ENCODE measurements at regions of chr6 and their contacts with region 1.

Region 1: DNA sequence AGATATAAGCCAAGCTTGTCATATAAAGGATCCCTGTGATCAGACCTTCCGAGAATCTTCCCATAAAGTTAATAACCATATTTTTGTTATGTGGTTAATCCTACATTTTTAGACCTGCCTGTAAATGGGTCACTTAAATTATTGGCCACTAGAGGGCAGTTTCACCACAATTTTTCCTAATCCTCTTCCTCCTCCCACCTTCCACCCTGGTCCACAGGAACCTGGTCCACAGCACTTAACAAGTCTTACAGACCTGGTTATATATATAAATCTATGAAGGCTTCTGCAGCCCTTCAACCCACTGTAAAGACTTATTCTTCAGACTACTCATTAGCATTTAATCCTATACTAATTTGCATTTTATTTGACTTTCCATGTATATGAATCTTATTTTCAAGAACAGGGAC is 28.3 kb downstream of the MRS2 start:
- DNase-seq: peak; percentile 7
- H3K4me3 ChIP-seq: no peak overlapping the region
- H3K27ac ChIP-seq: no peak overlapping the region
- H3K27me3 ChIP-seq: no peaks in the 10 kb centered on the region
- CTCF ChIP-seq: peak; percentile 72

Region 2: GRCh38 chr6:24270011-24270410 is 161.0 kb before region 1 on chr6:
- CTCF ChIA-PET with region 1: no interaction called
- POLR2A ChIA-PET with region 1: no interaction called
- DNase-seq: no peak
- H3K4me3 ChIP-seq: no peak overlapping the region
- H3K27ac ChIP-seq: no peak overlapping the region
- H3K27me3 ChIP-seq: no peaks in the 10 kb centered on the region
- CTCF ChIP-seq: no peak

Region 3: DNA sequence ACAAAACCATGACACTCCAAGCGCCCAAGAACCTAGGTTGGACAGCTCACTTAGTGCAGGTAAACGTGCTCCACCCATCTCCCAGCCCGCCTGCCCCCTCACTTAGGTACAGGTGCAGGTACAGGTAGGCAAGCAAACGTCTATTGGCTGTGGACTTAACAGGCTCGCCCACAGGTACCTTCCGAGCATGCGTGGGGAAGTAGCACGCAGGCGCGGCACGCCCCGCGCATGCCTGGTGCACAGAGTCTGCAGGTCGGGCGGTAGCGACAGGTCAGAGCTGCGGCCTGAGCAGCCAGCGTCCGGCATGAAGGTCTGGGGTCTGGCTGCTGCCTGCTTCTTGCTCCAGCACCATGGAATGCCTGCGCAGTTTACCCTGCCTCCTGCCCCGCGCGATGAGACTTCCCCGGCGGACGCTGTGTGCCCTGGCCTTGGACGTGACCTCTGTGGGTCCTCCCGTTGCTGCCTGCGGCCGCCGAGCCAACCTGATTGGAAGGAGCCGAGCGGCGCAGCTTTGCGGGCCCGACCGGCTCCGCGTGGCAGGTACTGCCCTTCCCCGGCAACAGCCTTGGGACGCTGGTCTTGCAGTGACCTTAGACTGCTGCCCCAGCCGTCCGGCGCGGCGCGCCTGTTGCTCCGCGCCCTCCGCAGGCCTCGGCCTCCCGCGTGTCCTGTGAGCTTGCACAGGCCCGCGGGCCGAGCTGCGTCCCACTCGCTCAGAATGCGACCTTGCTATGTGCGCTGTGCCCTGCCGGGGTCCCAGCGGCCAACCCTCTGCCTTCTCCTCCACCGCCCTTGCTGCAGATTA is 28.1 kb before region 1 on chr6 and contains the start of gene MRS2:
- CTCF ChIA-PET with region 1: interaction called, 14 read pairs
- POLR2A ChIA-PET with region 1: no interaction called
- DNase-seq: peak; percentile 18
- H3K4me3 ChIP-seq: peak within 1 kb of the TSS; percentile 97
- H3K27ac ChIP-seq: peak within 1 kb of the TSS; percentile 39
- H3K27me3 ChIP-seq: no peaks in the 10 kb centered on the region
- CTCF ChIP-seq: no peak
- polyA plus RNA-seq, gene MRS2: 15.1 and 19.9 TPM in 2 replicates

Region 4: GRCh38 chr6:24415753-24416152 is 15.3 kb before region 1 on chr6:
- CTCF ChIA-PET with region 1: interaction called, 24 read pairs
- POLR2A ChIA-PET with region 1: no interaction called
- DNase-seq: no peak
- H3K4me3 ChIP-seq: no peak overlapping the region
- H3K27ac ChIP-seq: no peak overlapping the region
- H3K27me3 ChIP-seq: no peaks in the 10 kb centered on the region
- CTCF ChIP-seq: no peak

Region 5: DNA sequence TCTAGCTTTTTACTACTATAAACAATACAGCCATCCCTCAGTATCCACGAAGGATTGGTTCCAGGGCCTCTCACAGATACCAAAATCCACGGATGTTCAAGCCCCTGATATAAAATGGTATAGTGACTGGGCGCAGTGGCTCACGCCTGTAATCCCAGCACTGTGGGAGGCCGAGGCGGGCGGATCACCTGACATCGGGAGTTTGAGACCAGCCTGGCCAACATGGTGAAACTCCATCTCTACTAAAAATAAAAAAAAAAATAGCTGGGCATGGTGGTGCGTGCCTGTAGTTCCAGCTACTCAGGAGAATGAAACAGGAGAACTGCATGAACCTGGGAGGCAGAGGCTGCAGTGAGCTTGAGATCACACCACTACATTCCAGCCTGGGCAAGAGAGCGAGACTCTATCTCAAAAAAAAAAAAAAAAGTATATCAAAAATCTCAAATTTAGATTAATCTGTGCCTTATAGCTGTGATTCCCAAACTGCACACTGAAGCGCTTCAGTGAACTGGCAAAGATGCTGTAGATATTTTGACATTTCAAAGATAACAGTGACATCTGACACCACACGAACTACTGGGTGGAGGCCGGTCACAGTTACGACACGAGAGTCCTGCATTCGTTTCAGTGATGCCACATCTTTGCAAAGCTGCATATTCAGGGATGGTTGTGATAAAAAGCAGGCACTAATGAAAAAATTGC is 10.0 kb after region 1 on chr6:
- CTCF ChIA-PET with region 1: interaction called, 15 read pairs
- POLR2A ChIA-PET with region 1: no interaction called
- DNase-seq: no peak
- H3K4me3 ChIP-seq: no peak overlapping the region
- H3K27ac ChIP-seq: no peak overlapping the region
- H3K27me3 ChIP-seq: no peaks in the 10 kb centered on the region
- CTCF ChIP-seq: no peak

Region 6: DNA sequence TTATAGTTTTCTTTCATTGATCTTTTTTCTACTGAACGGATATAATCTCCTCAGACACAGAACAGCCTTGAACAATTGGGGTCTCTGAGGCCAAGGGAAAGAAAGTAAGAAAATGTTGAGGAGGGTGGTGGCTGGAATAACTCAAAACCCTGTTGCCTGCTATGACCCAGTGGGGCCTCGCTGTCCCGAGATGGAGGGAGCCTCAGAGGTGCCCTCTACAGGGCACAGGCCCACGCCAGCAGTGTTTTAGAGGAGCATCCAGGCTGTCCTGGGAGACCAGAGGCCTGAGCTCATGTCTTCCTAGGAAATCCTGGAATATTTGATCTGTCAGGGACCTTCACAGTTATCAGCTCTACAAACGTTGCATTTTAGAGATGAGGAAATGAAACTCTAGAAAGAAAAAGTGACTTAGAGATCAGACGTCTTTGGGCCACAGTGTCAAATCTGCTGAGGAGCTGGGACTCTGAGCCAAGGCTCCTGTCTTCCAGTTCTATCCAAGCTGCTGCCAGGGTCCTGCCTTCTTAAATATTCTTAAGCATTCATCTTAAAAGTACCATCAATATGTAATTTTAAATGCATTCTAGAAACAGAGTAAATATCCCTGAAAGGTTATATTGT is 90.0 kb after region 1 on chr6:
- CTCF ChIA-PET with region 1: interaction called, 17 read pairs
- POLR2A ChIA-PET with region 1: no interaction called
- DNase-seq: no peak
- H3K4me3 ChIP-seq: no peak overlapping the region
- H3K27ac ChIP-seq: no peak overlapping the region
- H3K27me3 ChIP-seq: no peaks in the 10 kb centered on the region
- CTCF ChIP-seq: peak; percentile 72